ENCODE measurements at regions of chr1 and their contacts with region 1.

Region 1: GRCh38 chr1:192817246-192817645 is 8.4 kb downstream of the RGS2 start:
- DNase-seq: no peak
- ATAC-seq: no peak
- H3K4me3 ChIP-seq: no peak overlapping the region
- H3K27ac ChIP-seq: no peak overlapping the region
- H3K4me1 ChIP-seq: peaks cover 0 to 3% (median 3%) of the 10 kb centered on the region in 3 donors
- H3K27me3 ChIP-seq: no peaks in the 10 kb centered on the region
- CTCF ChIP-seq: no peak

Region 2: GRCh38 chr1:192601567-192601966 is 215.7 kb before region 1 on chr1:
- intact Hi-C with region 1: no loop called
- DNase-seq: no peak
- ATAC-seq: no peak
- H3K4me3 ChIP-seq: no peak overlapping the region
- H3K27ac ChIP-seq: no peak overlapping the region
- H3K4me1 ChIP-seq: no peaks in the 10 kb centered on the region
- H3K27me3 ChIP-seq: no peaks in the 10 kb centered on the region
- CTCF ChIP-seq: no peak

Region 3: DNA sequence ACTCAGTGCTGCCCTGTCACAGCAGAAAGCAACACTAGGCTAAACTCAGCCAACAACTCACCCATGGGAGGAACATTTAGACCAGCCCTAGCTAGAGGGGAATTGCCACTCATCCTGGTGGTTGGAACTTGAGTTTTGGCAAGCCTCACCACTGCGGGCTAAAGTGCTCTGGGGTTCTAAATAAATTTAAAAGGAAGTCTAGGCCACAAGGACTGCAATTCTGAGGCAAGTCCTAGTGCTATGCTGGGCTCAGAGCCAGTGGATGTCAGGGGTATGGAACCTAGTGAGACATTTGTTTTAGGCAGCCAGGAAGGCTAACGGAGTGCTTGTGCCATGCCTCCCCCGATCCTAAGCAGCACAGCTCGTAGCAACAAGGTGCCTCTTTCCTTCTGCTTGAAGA is 103.3 kb before region 1 on chr1:
- intact Hi-C with region 1: no loop called
- DNase-seq: no peak
- ATAC-seq: no peak
- H3K4me3 ChIP-seq: no peak overlapping the region
- H3K27ac ChIP-seq: no peak overlapping the region
- H3K4me1 ChIP-seq: no peaks in the 10 kb centered on the region
- H3K27me3 ChIP-seq: no peaks in the 10 kb centered on the region
- CTCF ChIP-seq: no peak

Region 4: GRCh38 chr1:192913683-192914082 is 96.4 kb after region 1 on chr1:
- intact Hi-C with region 1: loop called in 1 of 3 experiments (anchors 5 kb)
- DNase-seq: peak in 2 of 6 donors; percentile 45
- ATAC-seq: no peak
- H3K4me3 ChIP-seq: no peak overlapping the region
- H3K27ac ChIP-seq: no peak overlapping the region
- H3K4me1 ChIP-seq: peaks cover 3 to 8% (median 5%) of the 10 kb centered on the region in 3 donors
- H3K27me3 ChIP-seq: no peaks in the 10 kb centered on the region
- CTCF ChIP-seq: no peak